ENCODE measurements at regions of chr10 and their contacts with region 1.

Region 1: GRCh38 chr10:103918053-103918846 is at the start of gene STN1:
- DNase-seq: peak; percentile 92
- H3K4me3 ChIP-seq: peak within 1 kb of the TSS; percentile 63 to 67 (median 64)
- H3K27ac ChIP-seq: peak within 1 kb of the TSS; percentile 83
- H3K4me1 ChIP-seq: peaks cover 31% of the 10 kb centered on the region
- H3K27me3 ChIP-seq: no peaks in the 10 kb centered on the region
- CTCF ChIP-seq: no peak
- total RNA-seq, gene STN1: 42.6 to 65.0 TPM

Region 2: DNA sequence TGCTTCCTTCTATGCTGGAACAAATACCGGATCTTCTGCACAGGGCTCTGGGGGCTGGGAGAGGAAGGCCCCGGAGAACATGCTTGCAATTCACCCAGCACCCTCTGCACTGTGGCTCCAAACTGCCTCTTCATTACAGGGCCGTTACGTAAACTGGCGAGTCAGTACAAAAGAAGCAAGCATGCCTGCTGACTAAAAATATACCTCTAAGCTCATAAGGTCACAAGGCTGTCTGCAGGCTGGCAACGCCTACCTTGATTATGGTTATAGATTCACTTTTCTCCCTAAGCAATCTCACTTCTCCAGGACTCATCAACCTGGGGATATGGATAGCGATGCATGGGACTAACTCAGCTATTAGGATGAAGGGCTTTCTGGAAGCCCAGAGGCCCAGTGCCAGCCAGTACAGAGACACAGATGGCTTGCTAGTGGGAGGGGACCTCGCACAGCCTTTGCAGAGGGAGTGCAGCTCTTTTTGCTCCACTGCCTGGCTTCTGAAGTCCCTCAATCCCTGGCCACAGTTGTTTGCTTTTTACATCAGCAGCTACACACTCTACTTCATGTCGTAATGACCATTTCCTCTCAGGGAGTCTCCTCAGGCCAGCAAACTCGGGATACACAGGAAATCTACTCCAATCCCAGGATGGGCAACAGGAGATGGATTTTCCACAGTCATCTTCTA is 159.0 kb before region 1 on chr10:
- CTCF ChIA-PET with region 1: no interaction called
- dilution Hi-C with region 1: no loop called
- in situ Hi-C with region 1: no loop called
- intact Hi-C with region 1: no loop called
- DNase-seq: peak; percentile 76
- H3K4me3 ChIP-seq: no peak overlapping the region
- H3K27ac ChIP-seq: peak overlapping the region; percentile 75
- H3K4me1 ChIP-seq: peaks cover 88% of the 10 kb centered on the region
- H3K27me3 ChIP-seq: no peaks in the 10 kb centered on the region
- CTCF ChIP-seq: no peak

Region 3: DNA sequence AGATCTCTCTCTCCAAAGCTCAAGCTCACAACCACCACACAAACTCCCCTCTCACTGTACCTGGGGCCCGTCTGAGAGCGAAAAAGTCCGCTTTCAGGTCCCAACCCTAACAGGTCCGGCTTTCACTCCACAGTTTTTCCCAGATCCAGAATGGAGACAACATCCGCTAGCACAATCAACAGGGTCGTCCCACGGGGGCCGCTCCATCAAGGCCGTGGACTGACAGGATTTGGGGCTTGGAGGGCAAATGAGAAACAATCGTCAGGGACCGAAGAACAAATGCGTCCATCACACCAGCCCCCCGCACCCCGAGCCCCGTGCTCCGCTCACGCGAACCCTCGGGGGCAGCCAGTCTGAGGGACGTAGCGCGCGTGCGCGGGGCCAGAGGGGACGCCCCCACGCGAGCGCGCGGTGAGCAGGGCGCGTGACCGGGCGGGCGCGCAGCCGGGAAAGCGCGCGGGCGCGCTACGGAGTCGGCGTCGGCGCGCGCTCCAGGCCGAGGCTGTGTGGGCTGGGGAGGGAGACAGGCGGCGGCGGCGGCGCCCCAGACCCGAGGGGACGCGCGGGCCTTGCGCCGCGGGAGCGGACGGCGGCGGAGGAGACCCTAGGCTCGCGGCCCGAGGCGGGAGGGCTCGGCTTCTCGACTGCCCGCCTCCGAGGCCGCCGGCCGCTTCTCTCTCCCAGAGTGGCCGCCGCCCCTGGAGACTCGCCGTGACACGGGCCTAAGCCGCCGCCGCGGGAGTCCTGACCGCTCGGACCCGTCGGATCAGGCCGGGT is 48.6 kb after region 1 on chr10 and contains the start of gene SLK:
- CTCF ChIA-PET with region 1: no interaction called
- dilution Hi-C with region 1: no loop called
- in situ Hi-C with region 1: loop called in 1 of 2 experiments (anchors 10 kb)
- intact Hi-C with region 1: loop called (anchors 1 kb)
- DNase-seq: peak; percentile 80
- H3K4me3 ChIP-seq: peak within 1 kb of the TSS; percentile 69 to 99 (median 97)
- H3K27ac ChIP-seq: peak within 1 kb of the TSS; percentile 72
- H3K4me1 ChIP-seq: peaks cover 13% of the 10 kb centered on the region
- H3K27me3 ChIP-seq: no peaks in the 10 kb centered on the region
- CTCF ChIP-seq: no peak
- total RNA-seq, gene SLK: 79.5 to 85.0 TPM

Measured in mammary epithelial cell (primary cell).